ENCODE measurements at regions of chr3 and their contacts with region 1.

Region 1: GRCh38 chr3:141402476-141403171 is 34.3 kb downstream of the ZBTB38 start:
- DNase-seq: peak in 1 of 2 experiments; percentile 35
- H3K4me3 ChIP-seq: peak overlapping the region; percentile 61; the same call in 1 of the 2 replicates
- H3K27ac ChIP-seq: no peak overlapping the region
- H3K4me1 ChIP-seq: no peaks in the 10 kb centered on the region; the same call in none of the 2 replicates
- H3K27me3 ChIP-seq: 0 out of 2 replicates have a peak, but pooled peaks cover 5% of the 10 kb centered on the region
- CTCF ChIP-seq: no peak

Region 2: GRCh38 chr3:141368062-141368924 is 34.3 kb before region 1 on chr3 and contains the start of gene ZBTB38:
- CTCF ChIA-PET with region 1: no interaction called
- POLR2A ChIA-PET with region 1: no interaction called
- intact Hi-C with region 1: loop called (anchors 5 kb)
- DNase-seq: peak; percentile 88 to 96
- H3K4me3 ChIP-seq: no peak within 1 kb of the TSS; the same call in 1 of the 2 replicates
- H3K27ac ChIP-seq: peak within 1 kb of the TSS; percentile 63
- H3K4me1 ChIP-seq: peaks cover 38% of the 10 kb centered on the region
- H3K27me3 ChIP-seq: no peaks in the 10 kb centered on the region
- CTCF ChIP-seq: no peak
- total RNA-seq, gene ZBTB38: 18.5 and 21.8 TPM in 2 replicates

Region 3: DNA sequence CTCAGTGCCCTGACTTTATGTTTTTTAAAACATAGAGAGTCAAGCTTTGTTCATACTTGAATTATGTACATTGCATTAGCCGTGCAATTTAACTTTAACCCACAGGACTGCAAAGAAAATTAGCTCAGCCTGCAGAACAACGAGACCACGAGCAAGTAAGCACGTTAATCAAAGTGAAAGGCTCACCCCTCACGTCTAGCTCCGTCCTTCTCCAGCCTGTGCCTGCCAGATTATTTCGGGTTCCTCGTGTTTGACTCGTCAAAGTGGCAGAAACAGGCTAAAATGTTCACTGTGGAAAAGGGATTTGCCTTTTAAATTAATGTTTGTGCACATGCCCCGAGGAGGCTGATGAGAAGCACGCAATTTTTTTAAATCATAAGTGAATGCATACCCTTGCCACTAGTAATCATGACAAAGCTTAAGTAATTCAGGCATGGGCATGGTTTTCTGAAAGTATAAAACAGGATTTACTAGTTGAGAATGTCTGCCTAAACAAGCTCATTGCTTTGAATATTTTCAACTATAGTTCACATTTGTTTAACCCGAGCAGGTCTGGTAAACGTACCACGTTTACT is 19.0 kb before region 1 on chr3:
- CTCF ChIA-PET with region 1: no interaction called
- POLR2A ChIA-PET with region 1: interaction called, 12 read pairs
- intact Hi-C with region 1: no loop called
- DNase-seq: no peak
- H3K4me3 ChIP-seq: no peak overlapping the region
- H3K27ac ChIP-seq: no peak overlapping the region
- H3K4me1 ChIP-seq: no peaks in the 10 kb centered on the region
- H3K27me3 ChIP-seq: no peaks in the 10 kb centered on the region
- CTCF ChIP-seq: no peak

Region 4: DNA sequence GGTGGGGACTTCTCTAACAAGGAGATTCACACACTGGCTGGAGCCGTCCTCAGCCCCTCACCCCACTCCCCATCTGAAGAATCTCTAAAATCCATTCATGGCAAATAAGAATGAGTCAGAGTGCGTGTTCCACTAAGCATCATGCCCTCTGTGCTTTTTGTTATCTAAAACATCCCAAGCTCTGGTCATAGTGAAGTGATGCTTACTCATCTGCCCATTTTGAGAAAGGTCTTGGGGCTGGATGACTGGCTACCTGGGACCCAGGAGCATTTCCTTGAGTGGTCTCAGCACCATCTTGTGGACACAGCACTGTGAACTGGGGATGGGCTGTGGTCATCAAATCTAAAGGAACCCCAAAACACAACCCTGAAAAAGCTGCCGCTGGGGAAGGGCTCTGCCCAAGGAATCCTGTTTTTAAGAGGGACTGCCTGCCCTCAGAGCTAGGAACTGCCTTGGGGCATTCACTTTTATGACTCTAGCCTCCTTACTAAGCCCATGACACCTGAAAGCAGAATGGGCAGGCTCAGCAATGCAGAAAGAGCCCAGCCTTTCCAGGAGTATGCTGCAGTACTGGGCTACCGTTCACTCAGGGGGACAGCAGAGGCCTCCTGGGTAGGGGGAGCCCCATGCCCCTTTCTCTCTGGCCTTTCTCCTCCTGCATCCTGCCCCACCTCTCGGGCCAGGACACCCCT is 19.2 kb after region 1 on chr3:
- CTCF ChIA-PET with region 1: no interaction called
- POLR2A ChIA-PET with region 1: no interaction called
- intact Hi-C with region 1: no loop called
- DNase-seq: no peak
- H3K4me3 ChIP-seq: no peak overlapping the region
- H3K27ac ChIP-seq: no peak overlapping the region
- H3K4me1 ChIP-seq: no peaks in the 10 kb centered on the region
- H3K27me3 ChIP-seq: no peaks in the 10 kb centered on the region
- CTCF ChIP-seq: no peak

Measured in PC-9 (cell line).